ENCODE measurements at regions of chr14 and their contacts with region 1.

Region 1: GRCh38 chr14:24952851-24953666 is 96.9 kb downstream of the STXBP6 start:
- DNase-seq: no peak
- H3K4me3 ChIP-seq: no peak overlapping the region
- H3K27ac ChIP-seq: no peak overlapping the region
- H3K27me3 ChIP-seq: no peaks in the 10 kb centered on the region
- CTCF ChIP-seq: no peak

Region 2: GRCh38 chr14:24972844-24973243 is 19.8 kb after region 1 on chr14:
- CTCF ChIA-PET with region 1: interaction called, 10 read pairs
- POLR2A ChIA-PET with region 1: no interaction called
- DNase-seq: no peak
- H3K4me3 ChIP-seq: no peak overlapping the region
- H3K27ac ChIP-seq: no peak overlapping the region
- H3K27me3 ChIP-seq: no peaks in the 10 kb centered on the region
- CTCF ChIP-seq: no peak

Measured in AG04450 (cell line).